ENCODE measurements at regions of chr3 and their contacts with region 1.

Region 1: DNA sequence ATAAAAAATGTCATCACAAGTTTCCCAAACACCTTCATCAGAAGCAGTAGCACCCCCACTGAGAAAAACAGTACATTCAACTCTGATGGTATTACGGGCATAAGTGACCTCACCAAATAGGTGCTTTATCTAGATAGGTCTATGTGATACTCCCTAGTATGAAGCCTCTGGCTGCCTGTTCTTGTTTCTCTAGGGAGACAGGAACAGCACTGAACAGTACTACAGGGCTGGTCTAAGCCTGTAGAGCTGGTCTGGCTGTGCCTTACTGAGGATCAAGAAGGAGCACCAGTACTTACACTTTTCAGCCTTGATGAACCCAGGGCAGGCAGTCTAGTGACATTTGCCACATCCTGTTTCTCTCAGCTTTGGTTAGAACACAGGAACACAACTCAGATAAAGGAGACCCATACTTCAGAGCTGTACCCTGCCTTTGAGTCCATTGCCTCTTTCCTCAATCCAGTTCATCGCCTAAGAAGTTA is 35.9 kb downstream of the OXNAD1 start:
- DNase-seq: peak; percentile 90
- H3K4me3 Mint-ChIP-seq: peak overlapping the region; percentile 86
- H3K27ac Mint-ChIP-seq: peak overlapping the region; percentile 97
- H3K4me1 Mint-ChIP-seq: peaks cover 83% of the 10 kb centered on the region
- H3K27me3 Mint-ChIP-seq: no peaks in the 10 kb centered on the region

Region 2: GRCh38 chr3:16319307-16319706 is 18.4 kb after region 1 on chr3:
- intact Hi-C with region 1: loop called (anchors 1 kb)
- DNase-seq: peak; percentile 94
- H3K4me3 Mint-ChIP-seq: peak overlapping the region; percentile 35
- H3K27ac Mint-ChIP-seq: peak overlapping the region; percentile 80
- H3K4me1 Mint-ChIP-seq: peaks cover 61% of the 10 kb centered on the region
- H3K27me3 Mint-ChIP-seq: no peaks in the 10 kb centered on the region